Ovary (tissue), 10 donors: ENCODE measurements at regions of chr18 and their contacts with region 1.

Region 1: GRCh38 chr18:36693931-36694620 is 134.7 kb downstream of the TPGS2 start:
- DNase-seq: no peak
- H3K4me3 ChIP-seq: no peak overlapping the region
- H3K27ac ChIP-seq: no peak overlapping the region
- H3K4me1 ChIP-seq: peaks cover 1% of the 10 kb centered on the region
- H3K27me3 ChIP-seq: no peaks in the 10 kb centered on the region
- CTCF ChIP-seq: no peak
- EP300 ChIP-seq: no peak
- POLR2A ChIP-seq: no peak

Region 2: DNA sequence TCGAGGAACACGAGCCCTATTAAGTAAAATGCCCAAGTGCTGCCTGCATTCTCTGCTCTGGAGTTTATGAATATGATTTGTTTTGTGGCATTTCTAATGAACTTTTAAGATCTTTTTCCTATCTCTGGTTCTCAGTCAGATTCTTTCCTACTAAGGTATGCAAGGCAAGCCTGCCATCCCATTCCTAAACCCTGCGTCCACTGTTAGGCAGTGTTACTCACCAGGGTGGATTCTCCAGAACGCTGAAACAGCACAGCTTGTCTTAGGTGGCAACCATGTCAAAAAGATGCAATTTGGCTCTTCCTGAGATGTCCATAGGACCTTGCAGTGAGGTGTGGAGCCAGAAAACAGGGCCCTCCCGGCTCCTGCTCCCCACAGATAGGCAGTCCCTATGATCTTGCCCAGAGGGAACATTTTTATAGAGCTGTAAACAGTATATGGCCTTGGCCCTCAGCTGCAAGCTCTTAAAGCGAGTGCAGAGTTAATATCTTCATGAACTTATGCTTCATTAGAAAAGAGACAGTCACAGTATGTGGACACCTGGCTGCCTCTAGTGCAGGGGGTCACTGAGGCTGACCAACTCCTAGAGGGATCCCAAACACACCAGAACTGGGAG is 50.3 kb after region 1 on chr18:
- intact Hi-C with region 1: loop called in 1 of 4 experiments (anchors 10 kb)
- DNase-seq: no peak
- H3K4me3 ChIP-seq: no peak overlapping the region
- H3K27ac ChIP-seq: no peak overlapping the region
- H3K4me1 ChIP-seq: no peaks in the 10 kb centered on the region
- H3K27me3 ChIP-seq: no peaks in the 10 kb centered on the region
- CTCF ChIP-seq: no peak
- EP300 ChIP-seq: no peak
- POLR2A ChIP-seq: no peak

Region 3: GRCh38 chr18:36757081-36757480 is 63.0 kb after region 1 on chr18:
- intact Hi-C with region 1: loop called in 1 of 4 experiments (anchors 10 kb)
- DNase-seq: no peak
- H3K4me3 ChIP-seq: no peak overlapping the region
- H3K27ac ChIP-seq: no peak overlapping the region
- H3K4me1 ChIP-seq: peaks cover 3% of the 10 kb centered on the region
- H3K27me3 ChIP-seq: no peaks in the 10 kb centered on the region
- CTCF ChIP-seq: peak in 2 of 3 donors; percentile 69 to 72
- EP300 ChIP-seq: no peak
- POLR2A ChIP-seq: no peak